Activated CD4-positive, alpha-beta T cell treated with anti-CD3 and anti-CD28 coated beads for 36 hours (primary cell): ENCODE measurements at regions of chr1 and their contacts with region 1.

Region 1: GRCh38 chr1:26921540-26922430 is at the start of gene NUDC:
- DNase-seq: peak; percentile 98
- ATAC-seq: peak; percentile 98
- H3K4me3 Mint-ChIP-seq: peak within 1 kb of the TSS; percentile 82
- H3K27ac Mint-ChIP-seq: peak within 1 kb of the TSS; percentile 90
- H3K4me1 Mint-ChIP-seq: peaks cover 38% of the 10 kb centered on the region
- H3K27me3 Mint-ChIP-seq: no peaks in the 10 kb centered on the region
- total RNA-seq, gene NUDC: 95.9 to 101 TPM

Region 2: GRCh38 chr1:26889551-26890466 is 32.0 kb before region 1 on chr1 and contains the start of gene GPN2:
- CTCF ChIA-PET with region 1: interaction called, 6 read pairs
- POLR2A ChIA-PET with region 1: interaction called, 5 read pairs
- intact Hi-C with region 1: loop called (anchors 1 to 2 kb)
- DNase-seq: peak; percentile 86
- ATAC-seq: peak; percentile 97
- H3K4me3 Mint-ChIP-seq: peak within 1 kb of the TSS; percentile 92
- H3K27ac Mint-ChIP-seq: peak within 1 kb of the TSS; percentile 91
- H3K4me1 Mint-ChIP-seq: peaks cover 22% of the 10 kb centered on the region
- H3K27me3 Mint-ChIP-seq: no peaks in the 10 kb centered on the region
- total RNA-seq, gene GPN2: 44.3 to 45.6 TPM

Region 3: GRCh38 chr1:26900001-26900814 is 21.6 kb before region 1 on chr1 and contains the start of gene GPATCH3:
- CTCF ChIA-PET with region 1: interaction called, 4 read pairs
- POLR2A ChIA-PET with region 1: interaction called, 10 read pairs
- intact Hi-C with region 1: loop called (anchors 1 kb)
- DNase-seq: peak; percentile 95
- ATAC-seq: peak; percentile 93
- H3K4me3 Mint-ChIP-seq: peak within 1 kb of the TSS; percentile 94
- H3K27ac Mint-ChIP-seq: peak within 1 kb of the TSS; percentile 100
- H3K4me1 Mint-ChIP-seq: peaks cover 17% of the 10 kb centered on the region
- H3K27me3 Mint-ChIP-seq: no peaks in the 10 kb centered on the region
- total RNA-seq, gene GPATCH3: 7.0 to 8.7 TPM

Region 4: GRCh38 chr1:26993237-26994019 is 71.6 kb after region 1 on chr1 and contains the start of gene TRNP1:
- CTCF ChIA-PET with region 1: interaction called, 4 read pairs
- POLR2A ChIA-PET with region 1: no interaction called
- intact Hi-C with region 1: loop called in 1 of 2 experiments (anchors 1 kb)
- DNase-seq: peak; percentile 83
- ATAC-seq: peak; percentile 67
- H3K4me3 Mint-ChIP-seq: peak within 1 kb of the TSS; percentile 72
- H3K27ac Mint-ChIP-seq: peak within 1 kb of the TSS; percentile 63
- H3K4me1 Mint-ChIP-seq: peaks cover 19% of the 10 kb centered on the region
- H3K27me3 Mint-ChIP-seq: peaks cover 49% of the 10 kb centered on the region
- total RNA-seq, gene TRNP1: 0.62 to 0.69 TPM

Region 5: DNA sequence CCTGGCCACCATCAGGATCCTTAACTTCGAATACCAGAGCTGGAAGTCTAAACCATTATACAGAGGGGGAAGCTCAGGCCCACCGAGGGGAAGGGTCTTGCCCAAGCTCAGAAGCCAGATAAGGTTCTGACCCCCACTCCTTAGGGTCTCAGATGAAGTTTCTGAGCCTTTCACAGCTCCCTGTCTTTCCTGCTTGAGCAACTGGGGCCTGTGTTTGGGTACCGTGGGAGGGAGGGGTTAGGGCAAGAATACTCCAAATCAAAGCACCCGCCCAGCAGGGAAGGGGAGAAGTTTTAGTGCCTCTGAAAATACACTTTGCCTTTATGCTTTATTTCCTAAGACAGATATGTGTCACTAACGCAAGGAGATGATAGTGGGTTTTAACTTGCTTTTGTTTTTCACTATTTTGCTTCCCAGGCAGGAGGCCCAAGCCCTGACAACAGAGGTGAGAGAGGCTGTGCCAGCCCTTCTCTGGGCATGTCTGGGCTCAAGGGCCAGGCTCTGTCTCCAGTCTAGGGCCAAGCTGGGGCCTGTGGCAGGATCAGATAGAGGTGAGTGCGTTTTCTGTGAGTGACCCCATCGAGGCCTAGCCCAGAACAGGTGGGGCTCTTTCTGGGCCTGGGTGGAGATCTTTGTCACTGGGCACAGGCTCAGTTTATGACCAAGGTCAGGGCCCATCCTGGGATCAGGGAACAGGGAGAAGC is 111.4 kb after region 1 on chr1:
- CTCF ChIA-PET with region 1: no interaction called
- POLR2A ChIA-PET with region 1: no interaction called
- intact Hi-C with region 1: no loop called
- DNase-seq: no peak
- ATAC-seq: no peak
- H3K4me3 Mint-ChIP-seq: no peak overlapping the region
- H3K27ac Mint-ChIP-seq: no peak overlapping the region
- H3K4me1 Mint-ChIP-seq: no peaks in the 10 kb centered on the region
- H3K27me3 Mint-ChIP-seq: no peaks in the 10 kb centered on the region

Region 6: DNA sequence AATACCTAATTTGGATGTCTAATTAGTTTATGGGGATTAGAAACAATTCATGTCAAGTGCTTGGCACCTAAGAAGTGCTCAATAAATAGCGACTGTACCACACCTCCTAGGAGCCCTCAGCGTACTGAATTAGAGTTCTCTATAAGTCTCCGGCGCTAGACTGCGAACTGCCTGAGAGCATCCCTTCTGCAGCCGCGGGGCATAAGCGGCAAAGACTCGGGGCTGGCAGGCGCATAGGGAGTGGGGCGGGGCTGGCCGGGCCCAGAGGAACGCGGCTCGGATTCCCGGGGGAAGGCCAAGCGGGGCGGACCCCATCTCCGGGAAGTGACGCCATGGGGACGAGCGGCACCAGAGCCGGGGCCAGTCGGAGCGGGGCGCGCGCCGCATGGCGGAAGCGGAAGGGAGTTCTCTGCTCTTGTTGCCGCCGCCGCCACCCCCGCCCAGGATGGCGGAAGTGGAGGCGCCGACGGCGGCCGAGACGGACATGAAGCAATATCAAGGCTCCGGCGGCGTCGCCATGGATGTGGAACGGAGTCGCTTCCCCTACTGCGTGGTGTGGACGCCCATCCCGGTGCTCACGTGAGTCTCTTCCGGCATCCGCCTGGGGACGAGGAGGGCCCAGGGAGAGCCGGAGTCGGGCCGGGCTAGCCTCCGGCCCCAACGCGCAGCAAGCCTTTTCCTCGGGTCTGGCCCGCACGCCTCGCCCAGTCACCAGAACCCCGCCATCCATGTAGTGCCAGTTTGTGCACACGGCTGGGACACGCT is 400.2 kb after region 1 on chr1 and contains the start of gene TMEM222:
- CTCF ChIA-PET with region 1: no interaction called
- POLR2A ChIA-PET with region 1: no interaction called
- intact Hi-C with region 1: loop called in 1 of 2 experiments (anchors 1 kb)
- DNase-seq: peak; percentile 99
- ATAC-seq: peak; percentile 98
- H3K4me3 Mint-ChIP-seq: peak within 1 kb of the TSS; percentile 94
- H3K27ac Mint-ChIP-seq: peak within 1 kb of the TSS; percentile 90
- H3K4me1 Mint-ChIP-seq: peaks cover 41% of the 10 kb centered on the region
- H3K27me3 Mint-ChIP-seq: no peaks in the 10 kb centered on the region
- total RNA-seq, gene TMEM222: 27.5 to 31.2 TPM